G401 (cell line): ENCODE measurements at regions of chr18 and their contacts with region 1.

Region 1: GRCh38 chr18:21179590-21180220 is 62.3 kb upstream of the GREB1L start:
- DNase-seq: peak; percentile 53

Region 2: DNA sequence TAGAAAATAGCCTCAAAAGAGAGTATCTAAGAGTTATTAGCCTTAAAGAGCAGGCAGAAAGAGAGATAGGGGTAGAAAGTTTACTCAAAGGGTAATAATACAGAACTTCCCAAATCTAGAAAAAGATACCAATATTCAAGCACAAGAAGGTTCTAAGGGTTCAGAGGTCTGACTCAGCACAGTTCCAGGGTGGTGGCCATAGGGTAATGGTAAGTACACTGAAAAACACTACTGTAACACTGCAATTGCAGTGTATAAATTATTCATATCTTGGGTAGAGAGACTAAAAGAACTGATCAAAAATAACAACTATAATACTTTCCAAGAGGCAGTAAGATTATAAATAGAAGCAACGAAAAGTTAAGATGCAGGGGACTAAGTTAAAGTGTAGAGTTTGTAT is 183.3 kb before region 1 on chr18:
- in situ Hi-C with region 1: loop called (anchors 10 kb)
- DNase-seq: no peak

Region 3: DNA sequence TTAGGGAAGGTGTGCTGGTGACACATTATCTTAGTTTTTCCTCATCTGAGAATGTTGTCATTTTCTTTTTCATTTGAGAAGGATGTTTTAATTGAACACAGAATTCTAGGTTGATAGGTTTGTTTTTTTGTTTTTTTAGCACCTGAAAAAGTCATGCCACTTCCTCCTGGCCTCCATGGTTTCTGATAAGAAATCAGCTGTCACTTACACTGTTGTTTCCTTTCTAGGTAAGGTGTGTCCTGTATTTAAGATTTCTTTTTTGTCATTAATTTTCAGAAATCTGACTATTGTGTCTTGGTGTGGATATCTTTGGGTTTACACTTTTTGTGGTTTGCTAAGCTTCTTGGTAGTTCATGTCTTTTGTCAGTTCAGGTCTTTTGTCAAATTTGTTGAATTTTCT is 167.4 kb before region 1 on chr18:
- in situ Hi-C with region 1: no loop called
- DNase-seq: no peak

Region 4: DNA sequence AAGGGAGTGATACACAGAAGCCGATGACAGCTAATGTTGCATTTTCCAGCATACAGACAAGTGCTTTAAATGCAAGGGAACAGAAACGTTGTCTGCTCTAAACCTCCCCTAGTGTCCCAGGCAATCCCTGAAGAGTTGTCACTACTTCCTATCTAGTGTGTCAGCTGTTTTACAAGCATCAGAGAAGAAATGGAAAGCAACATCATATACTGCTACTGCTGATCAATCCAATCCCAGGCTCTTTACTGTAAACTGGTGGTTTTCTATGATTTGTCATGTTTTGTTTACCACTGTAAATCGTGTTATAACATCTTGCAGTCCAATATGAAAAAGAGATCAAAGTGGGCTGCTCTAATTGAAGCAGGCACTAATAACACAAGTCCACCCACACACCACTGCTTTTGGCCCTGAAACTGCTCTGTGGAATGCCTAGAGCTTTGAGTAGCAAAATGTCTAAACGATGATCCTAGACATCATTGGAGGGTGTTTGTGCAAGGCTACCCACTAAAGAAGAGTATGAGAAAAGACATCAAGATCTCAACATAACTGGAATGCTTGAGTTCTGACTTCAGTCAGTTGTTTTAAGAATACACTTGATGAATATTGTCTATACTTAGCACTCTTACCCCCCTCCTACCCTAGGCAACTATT is 50.0 kb before region 1 on chr18:
- in situ Hi-C with region 1: loop called (anchors 10 kb)
- DNase-seq: no peak

Region 5: DNA sequence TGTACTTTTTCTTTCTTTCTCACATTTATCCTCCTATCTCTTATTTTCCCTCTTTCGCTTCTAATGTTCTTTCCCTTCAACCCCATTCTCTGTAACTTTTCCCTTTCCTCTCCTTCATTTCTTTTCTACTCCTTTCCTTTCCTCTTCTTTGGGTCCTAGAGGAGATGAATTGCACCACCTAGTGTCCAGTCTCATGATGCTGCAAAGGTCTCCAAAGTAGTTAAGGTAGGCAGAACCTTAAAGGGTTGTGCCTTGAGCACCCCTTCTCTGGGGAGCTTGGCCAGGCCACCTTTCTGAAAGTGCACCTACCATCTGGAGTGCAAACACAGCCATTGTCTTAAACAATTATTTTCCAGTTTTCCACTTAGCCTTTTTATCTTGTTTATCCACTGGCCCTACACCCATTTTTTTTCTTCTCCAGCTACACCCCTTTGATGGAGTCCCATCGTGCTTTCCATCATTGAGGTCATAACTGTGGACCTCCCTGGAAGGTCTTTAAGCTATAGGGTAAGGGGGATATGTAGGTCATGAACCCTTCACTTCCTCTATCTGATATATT is 264.8 kb after region 1 on chr18:
- in situ Hi-C with region 1: loop called (anchors 10 kb)
- DNase-seq: peak; percentile 44

Region 6: DNA sequence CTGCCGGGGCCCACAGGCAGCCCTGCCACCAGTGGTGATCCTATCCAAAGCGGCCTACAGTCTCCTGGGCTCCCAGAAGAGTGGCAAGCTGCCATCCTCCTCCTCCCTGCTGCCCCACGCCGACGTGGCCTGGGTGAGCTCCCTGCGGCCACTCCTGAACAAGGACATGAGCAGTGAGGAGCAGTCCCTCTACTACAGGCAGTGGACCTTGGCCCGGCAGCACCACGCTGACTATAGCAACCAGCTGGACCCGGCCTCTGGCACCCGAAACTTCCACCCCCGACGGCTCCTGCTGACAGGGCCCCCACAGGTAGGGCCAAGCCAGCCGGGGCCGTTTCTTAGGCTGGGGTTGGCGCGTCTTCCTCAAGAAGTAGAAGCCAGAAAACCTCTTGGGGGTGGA is 320.3 kb after region 1 on chr18:
- in situ Hi-C with region 1: no loop called
- DNase-seq: no peak